CD4-positive, alpha-beta memory T cell (primary cell): ENCODE measurements at regions of chr20 and their contacts with region 1.

Region 1: DNA sequence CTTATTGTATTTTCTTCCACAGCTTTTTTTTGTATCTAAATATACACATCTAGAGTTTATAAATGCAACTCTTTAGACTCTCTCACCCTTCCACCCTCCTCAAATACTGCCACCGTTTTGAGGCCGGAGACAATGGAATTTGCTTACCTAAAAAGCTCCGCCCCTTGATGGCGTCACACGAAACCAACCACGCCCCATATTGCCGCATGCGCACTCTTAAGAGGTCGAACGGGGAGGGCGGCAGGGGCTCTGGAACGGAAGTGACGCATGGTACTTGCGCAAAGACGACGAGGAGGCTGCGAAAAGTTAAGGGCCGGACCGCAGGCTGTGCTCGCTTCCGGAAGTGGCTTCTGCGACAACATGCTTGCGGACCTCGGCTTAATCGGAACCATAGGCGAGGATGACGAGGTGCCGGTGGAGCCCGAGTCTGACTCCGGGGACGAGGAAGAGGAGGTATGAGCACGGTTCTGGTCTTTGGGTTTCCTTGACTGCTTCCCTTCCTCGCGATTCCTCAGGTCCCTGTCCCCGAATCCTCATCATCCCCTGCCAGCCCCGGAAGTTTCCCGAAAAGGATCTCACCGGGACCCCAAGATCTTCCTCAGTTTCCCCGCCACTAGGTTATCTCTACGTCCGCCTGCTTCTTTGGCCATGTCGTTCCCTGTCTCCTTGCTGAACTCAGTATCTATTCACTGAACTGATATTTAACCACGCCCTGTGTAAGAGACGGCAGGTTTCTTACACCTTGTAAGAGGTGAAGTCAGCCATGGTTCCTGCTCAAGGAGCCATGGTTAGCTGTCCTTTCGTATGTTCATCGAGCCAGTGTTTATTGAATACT is at the start of gene DDX27:
- DNase-seq: peak; percentile 97 to 98 (median 97)
- H3K4me3 ChIP-seq: peak within 1 kb of the TSS; percentile 83 to 87
- H3K4me3 Mint-ChIP-seq: peak within 1 kb of the TSS; percentile 90 to 100 (median 95)
- H3K27ac ChIP-seq: peak within 1 kb of the TSS; percentile 94
- H3K27ac Mint-ChIP-seq: peak within 1 kb of the TSS; percentile 85 to 100 (median 99)
- H3K4me1 ChIP-seq: peaks cover 30% of the 10 kb centered on the region
- H3K4me1 Mint-ChIP-seq: peaks cover 18 to 39% (median 26%) of the 10 kb centered on the region in 4 donors
- H3K27me3 ChIP-seq: no peaks in the 10 kb centered on the region
- H3K27me3 Mint-ChIP-seq: no peaks in the 10 kb centered on the region
- total RNA-seq, gene DDX27: 60.3 to 60.4 TPM

Region 2: GRCh38 chr20:48574393-48574792 is 644.9 kb before region 1 on chr20:
- CTCF ChIA-PET with region 1: no interaction called
- POLR2A ChIA-PET with region 1: no interaction called
- intact Hi-C with region 1: no loop called
- DNase-seq: no peak
- H3K4me3 ChIP-seq: no peak overlapping the region
- H3K4me3 Mint-ChIP-seq: no peak overlapping the region
- H3K27ac ChIP-seq: no peak overlapping the region
- H3K27ac Mint-ChIP-seq: no peak overlapping the region
- H3K4me1 ChIP-seq: no peaks in the 10 kb centered on the region
- H3K4me1 Mint-ChIP-seq: no peaks in the 10 kb centered on the region
- H3K27me3 ChIP-seq: no peaks in the 10 kb centered on the region
- H3K27me3 Mint-ChIP-seq: peaks cover 2 to 8% of the 10 kb centered on the region in 2 donors

Region 3: GRCh38 chr20:49037962-49038387 is 181.3 kb before region 1 on chr20:
- CTCF ChIA-PET with region 1: interaction called, 4 read pairs
- POLR2A ChIA-PET with region 1: no interaction called
- intact Hi-C with region 1: loop called (anchors 2 kb)
- DNase-seq: peak in 4 of 5 donors; percentile 31 to 34 (median 34)
- H3K4me3 ChIP-seq: no peak overlapping the region
- H3K4me3 Mint-ChIP-seq: peak overlapping the region in 7 of 8 donors; percentile 14 to 67 (median 54)
- H3K27ac ChIP-seq: no peak overlapping the region
- H3K27ac Mint-ChIP-seq: peak overlapping the region; percentile 22 to 92 (median 81)
- H3K4me1 ChIP-seq: peaks cover 23% of the 10 kb centered on the region
- H3K4me1 Mint-ChIP-seq: peaks cover 16 to 20% (median 18%) of the 10 kb centered on the region in 4 donors
- H3K27me3 ChIP-seq: no peaks in the 10 kb centered on the region
- H3K27me3 Mint-ChIP-seq: no peaks in the 10 kb centered on the region

Region 4: GRCh38 chr20:49132995-49133478 is 86.3 kb before region 1 on chr20:
- CTCF ChIA-PET with region 1: interaction called, 237 read pairs
- POLR2A ChIA-PET with region 1: interaction called, 16 read pairs
- intact Hi-C with region 1: loop called (anchors 1 kb)
- DNase-seq: peak in 4 of 5 donors; percentile 58 to 61 (median 60)
- H3K4me3 ChIP-seq: no peak overlapping the region
- H3K4me3 Mint-ChIP-seq: no peak overlapping the region
- H3K27ac ChIP-seq: no peak overlapping the region
- H3K27ac Mint-ChIP-seq: peak overlapping the region in 6 of 7 donors; percentile 1 to 71 (median 38)
- H3K4me1 ChIP-seq: no peaks in the 10 kb centered on the region
- H3K4me1 Mint-ChIP-seq: peaks cover 5 to 15% (median 8%) of the 10 kb centered on the region in 4 donors
- H3K27me3 ChIP-seq: no peaks in the 10 kb centered on the region
- H3K27me3 Mint-ChIP-seq: no peaks in the 10 kb centered on the region

Region 5: GRCh38 chr20:49179368-49180277 is 39.7 kb before region 1 on chr20:
- CTCF ChIA-PET with region 1: interaction called, 41 read pairs
- POLR2A ChIA-PET with region 1: interaction called, 6 read pairs
- intact Hi-C with region 1: no loop called
- DNase-seq: no peak
- H3K4me3 ChIP-seq: no peak overlapping the region
- H3K4me3 Mint-ChIP-seq: peak overlapping the region in 5 of 8 donors; percentile 14 to 62 (median 26)
- H3K27ac ChIP-seq: no peak overlapping the region
- H3K27ac Mint-ChIP-seq: peak overlapping the region in 5 of 7 donors; percentile 43 to 89 (median 49)
- H3K4me1 ChIP-seq: peaks cover 60% of the 10 kb centered on the region
- H3K4me1 Mint-ChIP-seq: peaks cover 36 to 64% (median 51%) of the 10 kb centered on the region in 4 donors
- H3K27me3 ChIP-seq: no peaks in the 10 kb centered on the region
- H3K27me3 Mint-ChIP-seq: no peaks in the 10 kb centered on the region

Region 6: DNA sequence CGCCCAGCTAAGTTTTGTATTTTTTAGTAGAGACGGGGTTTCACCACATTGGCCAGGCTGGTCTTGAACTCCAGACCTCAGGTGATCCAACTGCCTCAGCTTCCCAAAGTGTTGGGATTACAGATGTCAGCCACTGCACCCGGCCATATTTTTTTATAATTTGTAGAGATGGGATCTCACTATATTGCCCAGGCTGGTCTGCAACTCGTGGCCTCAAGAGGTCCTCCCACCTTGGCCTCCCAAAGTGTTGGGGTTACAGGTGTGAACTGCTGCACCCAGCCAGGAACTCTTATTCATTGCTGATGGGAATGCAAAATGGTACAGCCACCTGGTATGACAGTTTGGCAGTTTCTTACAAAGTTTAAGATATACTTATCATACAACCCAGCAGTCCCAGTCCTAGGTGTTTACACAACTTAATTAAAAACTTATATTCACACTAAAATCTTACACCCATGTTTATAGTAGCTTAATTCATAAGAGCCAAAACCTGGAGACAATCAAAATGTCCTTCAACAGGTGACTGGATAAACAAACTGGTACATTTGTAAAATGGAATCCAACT is 19.5 kb before region 1 on chr20:
- CTCF ChIA-PET with region 1: interaction called, 12 read pairs
- POLR2A ChIA-PET with region 1: no interaction called
- intact Hi-C with region 1: no loop called
- DNase-seq: no peak
- H3K4me3 ChIP-seq: no peak overlapping the region
- H3K4me3 Mint-ChIP-seq: no peak overlapping the region
- H3K27ac ChIP-seq: no peak overlapping the region
- H3K27ac Mint-ChIP-seq: no peak overlapping the region
- H3K4me1 ChIP-seq: no peaks in the 10 kb centered on the region
- H3K4me1 Mint-ChIP-seq: no peaks in the 10 kb centered on the region
- H3K27me3 ChIP-seq: no peaks in the 10 kb centered on the region
- H3K27me3 Mint-ChIP-seq: no peaks in the 10 kb centered on the region

Region 7: DNA sequence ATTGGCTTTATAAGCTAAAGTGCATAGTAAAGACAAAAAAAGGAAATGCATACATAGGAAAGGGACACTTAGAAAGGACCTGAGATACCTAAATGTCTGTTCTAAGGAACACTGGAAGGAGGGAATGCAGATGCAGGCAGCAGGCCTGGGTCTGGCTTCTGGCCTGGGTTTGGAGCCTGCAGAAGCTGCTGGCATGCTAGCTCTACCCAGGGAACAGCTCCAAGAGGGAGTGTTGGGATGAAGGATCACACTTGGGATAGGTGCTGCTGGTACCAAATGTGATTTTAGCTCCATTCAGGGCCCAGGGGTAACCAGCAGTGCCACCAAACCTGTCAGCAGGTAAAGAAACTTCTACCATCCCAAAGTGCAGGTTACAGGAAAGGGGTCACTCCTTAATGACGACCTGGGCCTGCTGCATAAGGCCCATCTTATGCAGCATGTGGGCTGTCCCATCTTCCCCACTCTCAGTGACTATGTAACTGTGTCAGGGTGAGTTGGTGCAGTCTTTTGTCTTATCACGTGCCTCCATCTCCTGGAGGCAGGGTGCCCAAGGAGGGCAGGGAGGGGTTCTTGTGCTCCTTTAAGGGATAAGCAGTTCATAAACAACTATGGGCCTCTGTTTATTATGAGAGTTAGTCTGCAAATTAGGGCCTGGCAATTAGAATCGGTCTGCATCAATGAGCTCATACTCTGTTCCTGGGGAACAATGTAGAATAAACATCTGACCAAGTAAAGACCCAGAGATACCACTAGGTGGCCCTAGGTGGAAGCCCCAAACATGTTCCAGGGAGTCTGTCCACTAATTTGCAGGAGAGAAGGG is 26.8 kb after region 1 on chr20:
- CTCF ChIA-PET with region 1: interaction called, 13 read pairs
- POLR2A ChIA-PET with region 1: no interaction called
- intact Hi-C with region 1: no loop called
- DNase-seq: peak in 4 of 5 donors; percentile 12 to 38 (median 32)
- H3K4me3 ChIP-seq: no peak overlapping the region
- H3K4me3 Mint-ChIP-seq: no peak overlapping the region
- H3K27ac ChIP-seq: no peak overlapping the region
- H3K27ac Mint-ChIP-seq: peak overlapping the region; percentile 4 to 61 (median 34)
- H3K4me1 ChIP-seq: no peaks in the 10 kb centered on the region
- H3K4me1 Mint-ChIP-seq: peaks cover 5 to 8% (median 7%) of the 10 kb centered on the region in 4 donors
- H3K27me3 ChIP-seq: no peaks in the 10 kb centered on the region
- H3K27me3 Mint-ChIP-seq: no peaks in the 10 kb centered on the region